Right lobe of liver (tissue), 6 donors: ENCODE measurements at regions of chr16 and their contacts with region 1.

Region 1: DNA sequence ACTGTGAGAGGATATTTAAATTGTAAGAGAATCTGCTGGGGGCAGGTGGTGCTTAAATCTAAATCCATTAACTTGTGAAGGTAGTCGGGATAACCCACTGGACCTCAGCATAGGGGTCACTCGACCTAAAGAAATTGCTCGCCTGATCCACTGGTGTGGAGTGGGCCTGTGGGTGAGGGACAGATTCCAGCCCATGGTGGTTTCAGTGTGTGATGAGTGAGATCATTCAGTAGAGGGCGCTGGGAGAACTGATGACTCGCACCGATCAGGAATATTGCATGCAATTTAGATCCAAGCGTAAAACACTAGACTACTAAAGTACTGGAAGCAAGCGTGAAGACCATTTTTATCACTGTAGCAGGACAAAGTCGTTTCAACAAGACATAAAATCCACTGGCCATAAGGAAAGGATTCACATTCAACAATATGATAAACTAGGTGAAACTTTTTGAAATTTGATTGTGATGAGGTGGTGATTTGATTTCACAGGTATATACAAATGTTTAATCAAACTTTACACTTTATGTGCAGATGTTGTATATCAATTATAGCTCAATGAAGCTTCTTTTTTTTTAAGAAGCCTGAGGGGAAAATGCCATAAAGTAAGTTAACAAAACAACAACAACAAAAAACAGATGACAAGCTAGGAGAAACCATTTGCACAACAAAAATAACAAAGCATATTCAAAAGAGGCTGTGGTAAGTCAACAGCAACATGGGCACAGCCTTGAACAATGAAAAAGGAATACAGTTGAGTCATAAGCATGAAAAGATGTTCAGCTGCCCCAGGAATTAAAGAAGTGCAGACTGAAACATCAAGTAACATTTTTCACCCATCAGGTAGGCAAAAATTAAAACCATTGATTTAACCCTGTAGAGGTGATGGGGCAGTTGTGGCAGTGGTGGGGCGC is 7.5 kb upstream of the TMEM170A start:
- DNase-seq: peak; percentile 36 to 64 (median 51)
- ATAC-seq: peak; percentile 97 to 99 (median 98)
- H3K4me3 ChIP-seq: no peak overlapping the region
- H3K27ac ChIP-seq: no peak overlapping the region
- H3K4me1 ChIP-seq: no peaks in the 10 kb centered on the region
- H3K27me3 ChIP-seq: no peaks in the 10 kb centered on the region
- CTCF ChIP-seq: peak; percentile 59 to 78 (median 74)
- POLR2A ChIP-seq: no peak

Region 2: GRCh38 chr16:75550211-75550662 is 78.3 kb after region 1 on chr16:
- intact Hi-C with region 1: loop called in 1 of 2 experiments (anchors 5 kb)
- DNase-seq: peak in 1 of 3 donors; percentile 60
- ATAC-seq: peak; percentile 88 to 94 (median 92)
- H3K4me3 ChIP-seq: no peak overlapping the region
- H3K27ac ChIP-seq: no peak overlapping the region
- H3K4me1 ChIP-seq: peaks cover 0 to 6% (median 0%) of the 10 kb centered on the region in 4 donors
- H3K27me3 ChIP-seq: no peaks in the 10 kb centered on the region
- CTCF ChIP-seq: peak; percentile 59 to 69 (median 64)
- POLR2A ChIP-seq: no peak

Region 3: DNA sequence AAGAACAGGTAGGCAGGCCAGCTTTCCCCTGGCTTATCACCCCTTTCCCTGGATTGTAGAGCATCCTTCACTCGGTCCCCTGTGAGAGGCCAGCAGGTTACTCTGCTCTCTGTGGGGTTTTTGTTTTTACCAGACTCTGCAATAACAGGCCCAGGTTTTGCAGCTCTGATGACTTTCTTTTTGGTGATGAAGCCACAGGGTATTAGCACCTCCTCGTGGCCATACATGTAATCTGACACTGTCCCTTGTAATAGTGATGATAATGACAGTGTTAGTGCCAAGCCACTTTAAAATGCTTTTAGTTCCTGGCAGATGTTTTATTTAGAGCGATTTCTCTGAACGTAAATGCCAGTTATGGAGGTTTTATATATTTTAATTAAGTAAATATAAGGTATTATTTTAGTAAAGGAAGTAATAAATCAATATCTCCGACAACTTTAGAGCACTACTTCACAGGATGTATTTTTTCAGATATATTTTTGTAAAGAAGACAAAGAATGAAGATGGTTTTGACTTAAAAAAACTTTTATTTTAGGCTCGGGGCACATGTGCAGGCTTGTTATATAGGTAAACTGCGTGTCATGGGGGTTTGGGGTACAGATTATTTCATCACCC is 292.3 kb after region 1 on chr16:
- intact Hi-C with region 1: loop called in 1 of 2 experiments (anchors 10 kb)
- DNase-seq: peak in 1 of 3 donors; percentile 50
- ATAC-seq: peak; percentile 91 to 99 (median 95)
- H3K4me3 ChIP-seq: no peak overlapping the region
- H3K27ac ChIP-seq: no peak overlapping the region
- H3K4me1 ChIP-seq: no peaks in the 10 kb centered on the region
- H3K27me3 ChIP-seq: no peaks in the 10 kb centered on the region
- CTCF ChIP-seq: peak; percentile 77 to 81 (median 79)
- POLR2A ChIP-seq: no peak